T-cell (primary cell): ENCODE measurements at regions of chr22 and their contacts with region 1.

Region 1: GRCh38 chr22:23128269-23129108 is 13.3 kb downstream of the RSPH14 start:
- DNase-seq: peak; percentile 35 to 83 (median 62)
- ATAC-seq: peak; percentile 75 to 94 (median 86)
- H3K4me3 ChIP-seq: no peak overlapping the region
- H3K4me3 Mint-ChIP-seq: no peak overlapping the region
- H3K27ac ChIP-seq: no peak overlapping the region
- H3K27ac Mint-ChIP-seq: no peak overlapping the region
- H3K4me1 ChIP-seq: peaks cover 0 to 9% of the 10 kb centered on the region in 2 experiments
- H3K4me1 Mint-ChIP-seq: peaks cover 0 to 5% (median 2%) of the 10 kb centered on the region in 3 donors
- H3K27me3 ChIP-seq: peaks cover 0 to 4% of the 10 kb centered on the region in 2 experiments
- H3K27me3 Mint-ChIP-seq: peaks cover 0 to 2% of the 10 kb centered on the region in 2 donors

Region 2: GRCh38 chr22:22959147-22959827 is 169.2 kb before region 1 on chr22:
- CTCF ChIA-PET with region 1: interaction called, 10 to 25 read pairs
- POLR2A ChIA-PET with region 1: interaction called in 1 of 2 experiments, 5 read pairs
- DNase-seq: peak; percentile 43 to 86 (median 67)
- ATAC-seq: peak in 3 of 4 experiments; percentile 32 to 65 (median 51)
- H3K4me3 ChIP-seq: no peak overlapping the region
- H3K4me3 Mint-ChIP-seq: no peak overlapping the region
- H3K27ac ChIP-seq: no peak overlapping the region
- H3K27ac Mint-ChIP-seq: no peak overlapping the region
- H3K4me1 ChIP-seq: peaks cover 0 to 5% of the 10 kb centered on the region in 2 experiments
- H3K4me1 Mint-ChIP-seq: peaks cover 4 to 5% (median 4%) of the 10 kb centered on the region in 3 donors
- H3K27me3 ChIP-seq: peaks cover 0 to 13% of the 10 kb centered on the region in 2 experiments
- H3K27me3 Mint-ChIP-seq: peaks cover 20 to 26% of the 10 kb centered on the region in 2 donors

Region 3: GRCh38 chr22:23457355-23458068 is 329.0 kb after region 1 on chr22:
- CTCF ChIA-PET with region 1: no interaction called
- POLR2A ChIA-PET with region 1: no interaction called
- DNase-seq: no peak
- ATAC-seq: no peak
- H3K4me3 ChIP-seq: peak overlapping the region in 1 of 2 donors; percentile 29
- H3K4me3 Mint-ChIP-seq: peak overlapping the region in 1 of 3 donors; percentile 46
- H3K27ac ChIP-seq: no peak overlapping the region
- H3K27ac Mint-ChIP-seq: no peak overlapping the region
- H3K4me1 ChIP-seq: peaks cover 7 to 8% of the 10 kb centered on the region in 2 experiments
- H3K4me1 Mint-ChIP-seq: peaks cover 6 to 13% (median 6%) of the 10 kb centered on the region in 3 donors
- H3K27me3 ChIP-seq: peaks cover 0 to 56% of the 10 kb centered on the region in 2 experiments
- H3K27me3 Mint-ChIP-seq: peaks cover 20 to 48% of the 10 kb centered on the region in 2 donors